Endothelial cell of umbilical vein (primary cell): ENCODE measurements at regions of chr10 and their contacts with region 1.

Region 1: DNA sequence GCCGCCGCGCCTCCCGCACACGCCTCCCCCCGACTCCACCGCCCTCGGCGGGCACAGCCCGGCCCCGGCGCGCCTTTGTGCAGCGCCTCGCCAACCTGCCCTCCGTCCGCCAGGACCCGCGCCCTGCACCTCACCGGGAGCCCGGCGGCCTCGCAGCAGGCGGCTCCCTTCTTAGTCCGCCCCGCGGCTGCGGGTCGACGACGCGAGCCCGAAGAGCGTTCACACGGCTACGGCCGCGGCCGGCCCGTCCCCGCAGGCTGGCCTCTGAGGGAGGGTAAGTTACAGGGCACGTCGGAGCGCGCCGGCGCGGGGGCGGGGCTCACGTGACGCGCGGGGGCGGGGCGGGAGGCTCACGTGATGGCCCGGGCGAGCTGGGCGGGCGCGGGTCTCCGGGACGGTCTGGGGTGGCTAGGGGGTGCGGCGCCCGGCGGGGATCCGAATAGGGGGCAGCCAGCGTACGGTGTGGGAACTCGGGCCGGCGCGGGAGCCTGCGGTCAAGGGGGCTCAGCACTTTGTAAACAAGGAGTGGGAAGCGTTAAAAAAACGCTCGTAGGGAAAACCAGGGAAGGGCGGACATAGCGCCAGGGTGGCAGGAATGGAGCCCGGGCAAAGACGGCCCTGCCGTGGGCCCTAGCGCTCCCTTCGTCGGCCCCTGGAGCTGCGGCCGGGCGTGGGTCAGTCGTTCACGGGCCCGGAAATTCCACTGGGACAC is at the start of gene ARHGAP12:
- DNase-seq: peak; percentile 89
- H3K4me3 ChIP-seq: peak within 1 kb of the TSS; percentile 74 to 90 (median 80)
- H3K27ac ChIP-seq: peak within 1 kb of the TSS; percentile 70
- H3K4me1 ChIP-seq: peaks cover 26% of the 10 kb centered on the region
- H3K27me3 ChIP-seq: no peaks in the 10 kb centered on the region
- CTCF ChIP-seq: no peak
- POLR2A ChIP-seq: peak; percentile 54
- total RNA-seq, gene ARHGAP12: 19.2 and 19.3 TPM in 2 replicates

Region 2: DNA sequence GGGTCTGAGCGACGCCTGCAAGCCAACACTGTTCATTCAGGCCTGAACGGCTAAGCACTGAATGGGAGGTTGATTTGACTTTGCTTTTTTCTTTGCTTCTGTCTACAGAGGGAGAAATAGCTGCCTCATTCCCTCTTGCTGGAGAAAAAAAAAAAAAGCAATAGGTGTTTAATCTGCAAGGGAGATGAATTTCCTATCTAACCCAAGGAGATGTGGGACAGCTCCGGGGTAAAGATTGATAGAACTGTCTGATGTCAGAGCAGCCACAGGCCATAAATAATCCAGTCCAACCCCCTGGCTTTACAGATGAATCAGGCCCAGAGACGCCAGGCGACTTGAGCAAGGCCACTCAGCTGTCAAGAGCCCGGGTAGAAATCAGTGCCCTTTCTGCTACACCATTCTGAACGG is 168.0 kb before region 1 on chr10:
- CTCF ChIA-PET with region 1: no interaction called
- POLR2A ChIA-PET with region 1: no interaction called
- dilution Hi-C with region 1: no loop called
- intact Hi-C with region 1: no loop called
- DNase-seq: no peak
- H3K4me3 ChIP-seq: peak overlapping the region in 1 of 3 experiments; percentile 1
- H3K27ac ChIP-seq: peak overlapping the region; percentile 63
- H3K4me1 ChIP-seq: peaks cover 11% of the 10 kb centered on the region
- H3K27me3 ChIP-seq: no peaks in the 10 kb centered on the region
- CTCF ChIP-seq: no peak
- POLR2A ChIP-seq: no peak

Region 3: DNA sequence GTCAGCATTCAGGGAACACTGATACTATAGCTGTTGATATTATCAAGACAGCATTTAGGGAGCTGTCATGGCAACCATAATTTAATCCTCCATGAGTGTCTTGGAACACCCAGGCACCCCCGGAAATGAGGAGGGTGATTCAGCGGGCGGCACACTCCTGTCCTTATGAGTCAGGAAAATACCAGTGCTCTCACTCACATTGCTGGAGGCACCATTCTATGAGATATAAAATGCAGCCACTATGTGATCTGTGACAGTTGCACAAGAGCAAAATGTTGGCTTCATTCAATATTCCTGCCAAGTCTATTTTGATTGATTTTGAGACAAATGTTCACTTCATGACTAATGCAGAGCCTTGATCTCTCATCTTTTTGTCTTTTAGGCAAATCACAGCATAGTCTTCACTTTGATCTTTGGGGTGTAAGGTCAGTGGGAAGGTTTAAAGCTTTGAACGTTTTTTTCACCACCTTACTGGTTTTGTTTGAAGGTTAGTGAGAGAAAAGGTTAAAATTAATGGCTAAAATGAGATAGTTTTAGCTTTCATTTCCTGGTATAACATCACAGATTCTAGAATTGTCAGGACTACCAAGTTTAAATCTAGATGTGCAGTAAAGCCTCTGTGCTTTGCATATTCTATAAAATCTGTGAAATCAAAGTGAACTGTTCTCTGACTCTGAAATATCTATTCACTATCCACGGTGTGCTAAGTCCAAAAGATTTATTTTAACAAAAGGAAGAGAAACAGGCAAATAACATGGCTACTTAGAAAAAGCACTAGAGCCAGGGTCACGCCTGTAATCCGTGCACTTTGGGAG is 12.3 kb after region 1 on chr10:
- CTCF ChIA-PET with region 1: interaction called, 37 read pairs
- POLR2A ChIA-PET with region 1: no interaction called
- dilution Hi-C with region 1: no loop called
- intact Hi-C with region 1: loop called (anchors 1 kb)
- DNase-seq: peak; percentile 78
- H3K4me3 ChIP-seq: no peak overlapping the region
- H3K27ac ChIP-seq: peak overlapping the region; percentile 77
- H3K4me1 ChIP-seq: peaks cover 35% of the 10 kb centered on the region
- H3K27me3 ChIP-seq: no peaks in the 10 kb centered on the region
- CTCF ChIP-seq: no peak
- POLR2A ChIP-seq: no peak

Region 4: GRCh38 chr10:32005050-32005449 is 76.3 kb after region 1 on chr10:
- CTCF ChIA-PET with region 1: interaction called, 19 read pairs
- POLR2A ChIA-PET with region 1: interaction called, 4 read pairs
- dilution Hi-C with region 1: no loop called
- intact Hi-C with region 1: loop called (anchors 5 kb)
- DNase-seq: peak; percentile 57
- H3K4me3 ChIP-seq: no peak overlapping the region
- H3K27ac ChIP-seq: no peak overlapping the region
- H3K4me1 ChIP-seq: no peaks in the 10 kb centered on the region
- H3K27me3 ChIP-seq: no peaks in the 10 kb centered on the region
- CTCF ChIP-seq: peak; percentile 41 to 55
- POLR2A ChIP-seq: no peak

Region 5: GRCh38 chr10:32377458-32378259 is 449.0 kb after region 1 on chr10:
- CTCF ChIA-PET with region 1: no interaction called
- POLR2A ChIA-PET with region 1: no interaction called
- dilution Hi-C with region 1: no loop called
- intact Hi-C with region 1: no loop called
- DNase-seq: peak; percentile 79
- H3K4me3 ChIP-seq: peak overlapping the region; percentile 87 to 99 (median 93)
- H3K27ac ChIP-seq: peak overlapping the region; percentile 85
- H3K4me1 ChIP-seq: peaks cover 13% of the 10 kb centered on the region
- H3K27me3 ChIP-seq: no peaks in the 10 kb centered on the region
- CTCF ChIP-seq: peak in 1 of 2 donors; percentile 9
- POLR2A ChIP-seq: no peak